ENCODE measurements at regions of chr6 and their contacts with region 1.

Region 1: DNA sequence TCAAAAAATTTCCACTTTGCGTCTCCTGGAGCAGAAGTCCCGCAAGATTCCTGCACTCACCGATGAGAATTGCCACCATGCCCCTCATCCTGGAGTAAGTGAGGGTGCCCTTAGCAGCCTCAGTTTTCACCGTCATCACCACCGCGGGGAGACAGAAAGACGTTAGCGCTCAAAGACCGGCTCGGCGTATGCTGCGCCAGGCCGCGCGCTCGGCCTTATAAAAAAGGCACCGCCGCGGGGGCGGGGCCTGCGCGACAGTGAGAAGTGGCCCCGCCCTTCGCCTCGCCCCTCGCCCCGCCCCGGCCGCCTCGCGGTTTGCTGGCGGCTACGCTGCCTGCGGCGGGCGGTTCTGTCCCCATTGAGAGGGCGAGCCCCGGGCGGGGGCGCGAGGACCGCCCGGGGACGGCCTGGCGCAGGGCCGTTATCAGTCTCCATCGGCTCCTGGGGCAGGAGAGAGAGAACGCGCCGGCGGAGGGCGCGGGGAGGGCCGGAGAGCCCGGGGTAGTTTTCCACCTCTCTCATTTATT is 122.3 kb upstream of the SLC2A12 start:
- DNase-seq: peak; percentile 95
- H3K4me3 Mint-ChIP-seq: peak overlapping the region; percentile 97
- H3K27ac Mint-ChIP-seq: peak overlapping the region; percentile 97
- H3K4me1 Mint-ChIP-seq: peaks cover 60% of the 10 kb centered on the region
- H3K27me3 Mint-ChIP-seq: no peaks in the 10 kb centered on the region

Region 2: DNA sequence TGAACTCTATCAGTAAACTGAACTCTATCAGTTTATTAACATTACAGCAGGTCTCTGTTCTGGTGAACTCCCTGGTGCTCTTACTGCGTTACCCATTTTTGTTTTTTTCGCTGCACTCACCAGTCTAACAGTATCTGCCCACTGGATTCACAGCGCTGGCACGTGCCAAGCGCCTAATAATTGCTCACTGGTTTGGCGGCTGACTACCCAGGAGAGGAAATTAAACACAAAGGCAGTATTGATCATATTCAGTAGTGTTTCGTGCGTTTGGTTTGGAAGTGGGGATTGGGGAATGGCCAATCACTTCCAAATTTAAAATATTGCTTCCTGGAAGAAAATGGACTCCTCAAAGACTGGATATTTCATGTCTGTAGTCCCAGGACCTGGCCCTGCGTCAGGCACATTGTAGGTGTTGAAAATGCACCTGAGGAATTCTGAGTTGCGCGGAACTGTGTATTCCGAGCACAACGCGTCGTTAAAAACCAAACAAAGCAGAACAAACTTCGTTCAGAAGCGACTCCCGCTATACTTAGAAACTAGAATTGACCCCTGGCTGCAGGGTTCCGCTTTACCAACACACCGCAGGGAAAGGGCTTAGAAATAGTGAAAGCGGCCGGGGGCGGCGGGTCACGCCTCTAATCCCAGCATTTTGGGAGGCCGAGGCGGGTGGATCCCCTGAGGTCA is 1361.4 kb before region 1 on chr6:
- CTCF ChIA-PET with region 1: no interaction called
- intact Hi-C with region 1: loop called (anchors 2 kb)
- DNase-seq: peak; percentile 51
- H3K4me3 Mint-ChIP-seq: peak overlapping the region; percentile 94
- H3K27ac Mint-ChIP-seq: peak overlapping the region; percentile 97
- H3K4me1 Mint-ChIP-seq: peaks cover 27% of the 10 kb centered on the region
- H3K27me3 Mint-ChIP-seq: no peaks in the 10 kb centered on the region

Region 3: GRCh38 chr6:134195164-134195906 is 20.6 kb after region 1 on chr6:
- CTCF ChIA-PET with region 1: interaction called, 11 read pairs
- intact Hi-C with region 1: no loop called
- DNase-seq: no peak
- H3K4me3 Mint-ChIP-seq: no peak overlapping the region
- H3K27ac Mint-ChIP-seq: no peak overlapping the region
- H3K4me1 Mint-ChIP-seq: peaks cover 24% of the 10 kb centered on the region
- H3K27me3 Mint-ChIP-seq: no peaks in the 10 kb centered on the region

Region 4: GRCh38 chr6:134288538-134289203 is 113.9 kb after region 1 on chr6:
- CTCF ChIA-PET with region 1: no interaction called
- intact Hi-C with region 1: loop called (anchors 1 kb)
- DNase-seq: no peak
- H3K4me3 Mint-ChIP-seq: peak overlapping the region; percentile 45
- H3K27ac Mint-ChIP-seq: peak overlapping the region; percentile 90
- H3K4me1 Mint-ChIP-seq: peaks cover 28% of the 10 kb centered on the region
- H3K27me3 Mint-ChIP-seq: no peaks in the 10 kb centered on the region

Region 5: GRCh38 chr6:134373282-134373922 is 198.7 kb after region 1 on chr6:
- CTCF ChIA-PET with region 1: interaction called, 3 read pairs
- intact Hi-C with region 1: loop called (anchors 1 kb)
- DNase-seq: peak; percentile 61
- H3K4me3 Mint-ChIP-seq: no peak overlapping the region
- H3K27ac Mint-ChIP-seq: peak overlapping the region; percentile 4
- H3K4me1 Mint-ChIP-seq: peaks cover 38% of the 10 kb centered on the region
- H3K27me3 Mint-ChIP-seq: no peaks in the 10 kb centered on the region

Region 6: GRCh38 chr6:134389129-134389528 is 214.4 kb after region 1 on chr6:
- CTCF ChIA-PET with region 1: no interaction called
- intact Hi-C with region 1: no loop called
- DNase-seq: no peak
- H3K4me3 Mint-ChIP-seq: no peak overlapping the region
- H3K27ac Mint-ChIP-seq: no peak overlapping the region
- H3K4me1 Mint-ChIP-seq: no peaks in the 10 kb centered on the region
- H3K27me3 Mint-ChIP-seq: no peaks in the 10 kb centered on the region

Region 7: DNA sequence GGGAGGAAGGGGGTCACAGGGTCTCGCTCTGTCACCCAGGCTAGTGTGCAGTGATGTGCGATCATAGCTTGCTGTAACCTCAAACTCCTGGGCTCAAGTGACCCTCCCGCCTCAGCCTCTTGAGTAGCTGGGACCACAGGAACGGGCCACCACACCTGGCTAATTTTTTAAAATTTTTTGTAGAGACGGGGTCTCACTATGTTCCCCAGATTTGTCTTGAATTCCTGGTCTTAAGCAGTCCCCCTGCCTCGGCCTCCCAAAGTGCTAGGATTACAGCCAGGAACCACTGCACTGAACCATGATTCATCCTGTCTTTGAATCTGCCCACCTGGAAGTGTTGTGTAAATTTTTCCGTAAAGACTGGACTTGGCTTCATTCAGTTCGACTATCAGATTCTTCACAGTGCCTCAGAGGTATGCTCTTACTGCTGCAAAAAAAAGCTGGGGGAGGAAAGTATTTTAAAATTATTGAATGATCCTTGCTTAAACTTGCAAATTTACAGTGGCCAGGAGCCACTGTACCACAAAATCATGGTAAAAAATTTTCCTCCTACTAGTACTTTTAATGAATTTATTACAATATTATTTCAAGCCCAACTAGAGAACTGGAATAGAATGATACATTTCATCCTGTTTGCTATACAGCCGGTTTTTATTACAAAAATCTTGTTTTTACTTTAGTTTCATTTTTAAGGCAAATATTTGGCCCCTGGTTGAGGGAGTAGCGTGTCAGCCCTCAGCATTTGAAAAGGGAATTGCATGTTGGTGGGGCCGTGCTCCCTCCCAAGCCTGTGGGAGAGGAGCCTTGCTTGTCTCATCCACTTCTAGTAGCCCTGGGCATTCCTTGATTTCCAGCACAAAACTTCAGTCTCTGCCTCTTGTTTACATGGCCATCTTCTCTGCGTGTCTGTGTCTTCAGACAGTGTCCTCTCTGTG is 345.7 kb after region 1 on chr6:
- CTCF ChIA-PET with region 1: no interaction called
- intact Hi-C with region 1: loop called (anchors 2 kb)
- DNase-seq: no peak
- H3K4me3 Mint-ChIP-seq: no peak overlapping the region
- H3K27ac Mint-ChIP-seq: peak overlapping the region; percentile 56
- H3K4me1 Mint-ChIP-seq: peaks cover 57% of the 10 kb centered on the region
- H3K27me3 Mint-ChIP-seq: no peaks in the 10 kb centered on the region

Region 8: GRCh38 chr6:134882426-134883038 is 707.8 kb after region 1 on chr6:
- CTCF ChIA-PET with region 1: no interaction called
- intact Hi-C with region 1: loop called (anchors 1 kb)
- DNase-seq: peak; percentile 80
- H3K4me3 Mint-ChIP-seq: no peak overlapping the region
- H3K27ac Mint-ChIP-seq: no peak overlapping the region
- H3K4me1 Mint-ChIP-seq: no peaks in the 10 kb centered on the region
- H3K27me3 Mint-ChIP-seq: peaks cover 10% of the 10 kb centered on the region

Measured in activated naive CD4-positive, alpha-beta T cell treated with anti-CD3 and anti-CD28 coated beads for 36 hours (primary cell).